Right ventricle myocardium superior (tissue), 1 donor: ENCODE measurements at regions of chr1 and their contacts with region 1.

Region 1: DNA sequence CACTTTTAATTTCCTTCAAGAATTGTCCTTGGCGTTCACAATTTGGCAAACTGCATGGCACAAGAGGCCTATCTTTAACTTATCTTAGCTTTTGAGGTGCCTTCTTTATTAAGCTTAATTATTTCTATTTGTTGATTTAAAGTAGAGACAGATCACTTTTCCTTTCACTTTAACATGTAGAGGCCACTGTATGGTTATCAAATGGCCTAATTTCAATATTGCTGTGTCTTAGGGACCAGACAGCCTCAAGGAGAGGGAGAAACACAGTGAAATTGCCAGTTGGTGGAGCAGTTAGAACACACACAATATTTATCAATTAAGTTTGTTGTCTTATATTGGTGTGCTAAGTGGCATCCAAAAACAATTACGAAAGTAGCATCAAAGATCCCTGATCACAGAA is 1013.9 kb downstream of the KCNT2 start:
- DNase-seq: no peak
- ATAC-seq: no peak

Region 2: GRCh38 chr1:195511501-195511900 is 82.8 kb before region 1 on chr1:
- intact Hi-C with region 1: no loop called
- DNase-seq: no peak
- ATAC-seq: no peak

Region 3: GRCh38 chr1:195540389-195540788 is 53.9 kb before region 1 on chr1:
- intact Hi-C with region 1: no loop called
- DNase-seq: no peak
- ATAC-seq: no peak

Region 4: GRCh38 chr1:195663549-195664280 is 69.4 kb after region 1 on chr1:
- intact Hi-C with region 1: loop called (anchors 2 kb)
- DNase-seq: no peak
- ATAC-seq: no peak